ENCODE measurements at regions of chr1 and their contacts with region 1.

Region 1: DNA sequence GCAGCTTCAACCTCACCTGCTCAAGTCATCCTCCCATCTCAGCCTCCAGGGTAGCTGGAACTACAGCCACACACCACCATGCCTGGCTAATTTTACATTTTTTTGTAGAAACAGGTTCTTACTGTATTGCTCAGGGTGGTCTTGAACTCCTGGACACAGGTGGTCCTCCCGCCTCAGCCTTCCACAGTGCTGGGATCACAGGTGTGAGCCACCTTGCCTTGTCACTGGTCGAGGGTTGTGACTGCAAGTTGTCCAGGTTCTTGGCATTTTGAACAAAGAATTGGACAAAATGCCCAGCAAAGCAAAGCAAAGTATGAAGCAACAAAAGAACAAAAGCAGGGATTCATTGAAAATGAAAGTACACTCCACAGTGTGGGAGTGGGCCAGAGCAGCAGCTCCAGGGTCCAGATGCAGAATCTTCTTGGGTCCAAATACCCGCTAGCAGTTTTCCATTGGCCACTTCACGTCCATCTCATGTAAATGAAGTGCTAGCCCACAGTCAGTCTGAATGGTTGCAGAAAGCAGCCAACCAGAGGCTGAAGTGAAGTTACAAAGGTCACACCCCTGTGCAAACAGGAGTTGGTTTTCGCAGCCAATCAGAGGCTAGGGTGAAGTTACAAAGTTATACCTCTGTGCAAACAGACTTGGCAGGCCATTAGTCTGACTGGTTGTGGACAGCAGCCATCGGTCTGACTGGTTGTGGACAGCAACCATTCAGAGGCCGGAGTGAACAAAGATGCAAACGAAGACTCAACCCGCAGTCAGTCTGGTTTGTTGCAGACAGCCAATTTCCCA is 109.5 kb upstream of the KIF26B start:
- DNase-seq: no peak
- H3K4me3 ChIP-seq: no peak overlapping the region
- H3K27ac ChIP-seq: peak overlapping the region; percentile 2
- H3K27me3 ChIP-seq: no peaks in the 10 kb centered on the region
- CTCF ChIP-seq: no peak

Region 2: DNA sequence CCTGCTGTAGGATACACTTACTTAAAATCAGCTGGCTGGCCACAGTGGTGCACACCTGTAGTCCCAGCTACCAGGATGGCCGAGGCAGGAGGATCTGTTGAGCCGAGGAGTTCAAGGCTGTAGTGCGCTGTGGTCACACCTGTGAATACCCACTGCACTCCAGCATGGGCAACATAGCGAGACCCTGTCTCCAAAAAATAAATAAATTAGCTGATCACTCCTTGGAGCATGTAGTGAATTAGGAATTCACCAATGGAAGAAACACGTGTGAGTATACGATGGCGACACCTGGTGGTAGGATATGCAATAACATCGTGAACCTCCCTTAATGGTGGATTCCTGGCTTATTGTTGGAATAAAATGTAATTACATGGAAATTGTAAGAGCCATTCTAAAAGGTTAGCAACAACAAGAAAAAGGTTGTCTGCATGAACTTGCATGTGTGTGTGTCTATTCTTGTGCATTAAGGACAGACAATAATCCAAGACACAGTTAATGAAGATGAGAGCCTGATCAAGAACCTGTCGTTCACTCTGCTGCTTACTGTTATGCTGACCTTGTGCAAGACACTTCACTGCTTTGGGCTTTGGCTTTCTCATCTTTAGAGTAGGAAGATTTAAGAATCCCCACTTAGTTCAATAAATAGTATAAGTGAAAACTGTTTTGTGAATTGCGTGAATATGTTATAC is 248.4 kb before region 1 on chr1:
- CTCF ChIA-PET with region 1: interaction called, 36 read pairs
- POLR2A ChIA-PET with region 1: no interaction called
- DNase-seq: peak; percentile 44
- H3K4me3 ChIP-seq: no peak overlapping the region
- H3K27ac ChIP-seq: no peak overlapping the region
- H3K27me3 ChIP-seq: no peaks in the 10 kb centered on the region
- CTCF ChIP-seq: peak; percentile 83

Region 3: GRCh38 chr1:244851546-244852231 is 193.6 kb before region 1 on chr1:
- CTCF ChIA-PET with region 1: interaction called, 24 read pairs
- POLR2A ChIA-PET with region 1: no interaction called
- DNase-seq: no peak
- H3K4me3 ChIP-seq: no peak overlapping the region
- H3K27ac ChIP-seq: no peak overlapping the region
- H3K27me3 ChIP-seq: no peaks in the 10 kb centered on the region
- CTCF ChIP-seq: no peak

Region 4: DNA sequence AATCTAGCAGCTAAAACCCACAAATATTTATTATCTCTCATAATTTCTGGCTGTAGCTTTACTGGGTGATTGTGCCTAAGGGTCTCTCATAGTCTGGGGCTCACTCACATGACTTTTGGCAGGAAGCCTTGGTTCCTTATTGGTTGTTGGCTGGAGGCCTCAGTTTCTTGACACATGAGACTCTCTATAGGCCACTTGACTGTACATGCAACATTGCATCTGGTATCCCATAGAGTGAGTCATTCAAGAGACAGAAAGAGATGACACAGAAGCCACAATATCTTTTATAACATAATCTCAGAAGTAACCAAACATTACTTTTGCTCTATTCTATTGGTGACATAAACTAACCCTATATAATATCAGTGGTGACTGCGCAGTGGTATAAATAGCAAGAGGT is 52.5 kb before region 1 on chr1:
- CTCF ChIA-PET with region 1: interaction called, 24 read pairs
- POLR2A ChIA-PET with region 1: no interaction called
- DNase-seq: no peak
- H3K4me3 ChIP-seq: no peak overlapping the region
- H3K27ac ChIP-seq: no peak overlapping the region
- H3K27me3 ChIP-seq: no peaks in the 10 kb centered on the region
- CTCF ChIP-seq: no peak

Region 5: DNA sequence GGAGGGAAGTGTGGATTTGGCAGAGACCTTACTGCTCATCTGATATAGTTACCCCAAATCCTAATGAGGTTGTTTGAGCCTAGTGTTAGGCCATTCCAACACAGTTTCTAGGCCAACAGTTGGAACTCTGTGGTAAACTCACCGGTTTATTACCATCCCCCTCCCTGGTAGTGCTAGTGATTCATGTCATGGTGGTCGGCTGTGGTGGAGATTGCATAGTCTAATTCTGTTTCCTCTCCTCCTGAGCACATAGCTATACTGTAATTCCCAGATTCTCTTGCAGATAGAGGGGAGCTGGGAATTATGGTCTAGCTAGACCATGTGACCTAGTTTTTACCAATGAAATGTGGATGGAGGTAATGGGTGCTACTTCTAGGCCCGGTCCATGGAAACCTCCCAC is 14.2 kb before region 1 on chr1:
- CTCF ChIA-PET with region 1: interaction called, 65 read pairs
- POLR2A ChIA-PET with region 1: no interaction called
- DNase-seq: no peak
- H3K4me3 ChIP-seq: no peak overlapping the region
- H3K27ac ChIP-seq: no peak overlapping the region
- H3K27me3 ChIP-seq: no peaks in the 10 kb centered on the region
- CTCF ChIP-seq: no peak

Measured in AG04450 (cell line).